Activated CD4-positive, alpha-beta T cell treated with anti-CD3 and anti-CD28 coated beads for 36 hours (primary cell): ENCODE measurements at regions of chr15 and their contacts with region 1.

Region 1: GRCh38 chr15:69523010-69524001 is 70.7 kb downstream of the RPLP1 start:
- DNase-seq: peak; percentile 88
- ATAC-seq: peak; percentile 73
- H3K4me3 Mint-ChIP-seq: no peak overlapping the region
- H3K27ac Mint-ChIP-seq: no peak overlapping the region
- H3K4me1 Mint-ChIP-seq: peaks cover 4% of the 10 kb centered on the region
- H3K27me3 Mint-ChIP-seq: peaks cover 3% of the 10 kb centered on the region

Region 2: DNA sequence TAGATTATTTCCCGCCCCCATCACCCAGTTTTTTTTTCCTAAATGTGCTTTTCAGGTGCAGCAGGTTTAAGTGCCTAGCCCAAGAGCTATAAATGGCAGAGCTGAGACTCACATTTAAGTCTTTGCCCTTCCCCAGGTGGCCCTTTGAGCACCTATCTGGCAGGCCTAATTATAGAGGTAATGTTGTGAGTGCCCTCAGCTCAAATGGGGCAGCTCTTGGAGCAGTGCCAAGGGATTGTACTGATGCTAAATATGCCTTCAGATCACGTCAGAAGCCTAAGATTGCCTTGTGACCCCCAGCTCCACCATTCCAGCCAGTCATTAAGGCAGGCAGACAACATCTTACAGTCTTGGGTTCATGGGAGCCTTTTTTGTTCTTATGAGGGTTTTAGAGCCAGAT is 88.8 kb after region 1 on chr15:
- CTCF ChIA-PET with region 1: no interaction called
- POLR2A ChIA-PET with region 1: no interaction called
- intact Hi-C with region 1: no loop called
- DNase-seq: no peak
- ATAC-seq: no peak
- H3K4me3 Mint-ChIP-seq: no peak overlapping the region
- H3K27ac Mint-ChIP-seq: no peak overlapping the region
- H3K4me1 Mint-ChIP-seq: peaks cover 8% of the 10 kb centered on the region
- H3K27me3 Mint-ChIP-seq: no peaks in the 10 kb centered on the region

Region 3: DNA sequence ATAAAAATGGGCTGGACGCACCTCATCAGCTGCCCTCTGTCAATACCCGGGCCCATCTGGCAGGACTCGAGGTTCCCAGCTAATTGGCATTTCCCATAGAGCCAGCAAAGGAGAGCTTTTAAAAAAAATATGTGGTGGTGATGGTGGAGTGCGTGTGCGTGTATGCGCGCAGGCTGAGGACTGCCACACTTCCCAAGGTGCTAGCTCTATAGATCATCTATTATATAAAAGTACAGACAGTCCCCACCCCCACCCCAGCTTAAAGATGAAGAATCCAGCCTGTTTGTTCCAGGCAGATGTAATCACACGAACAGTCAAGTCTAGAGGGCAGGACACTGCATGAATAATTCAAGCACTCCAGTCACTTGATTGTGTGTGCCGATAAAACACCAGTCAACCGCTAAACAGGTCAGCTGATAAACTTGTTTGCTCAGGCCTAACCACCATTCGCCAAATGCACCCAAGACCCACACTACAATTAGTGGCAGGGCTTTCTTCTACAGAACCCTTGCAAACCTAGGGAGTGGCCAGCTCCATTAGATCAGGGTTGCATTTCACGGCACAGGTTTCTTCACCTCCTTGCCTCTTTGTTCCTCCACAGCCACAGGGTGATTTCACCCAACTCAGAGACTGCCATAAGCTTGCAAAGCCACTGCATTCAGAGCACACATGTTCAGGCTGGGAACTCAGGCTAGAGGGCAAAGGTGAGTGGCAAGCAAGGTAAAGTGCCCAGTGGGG is 568.6 kb after region 1 on chr15:
- CTCF ChIA-PET with region 1: no interaction called
- POLR2A ChIA-PET with region 1: no interaction called
- intact Hi-C with region 1: loop called in 1 of 2 experiments (anchors 5 kb)
- DNase-seq: peak; percentile 39
- ATAC-seq: peak; percentile 16
- H3K4me3 Mint-ChIP-seq: peak overlapping the region; percentile 37
- H3K27ac Mint-ChIP-seq: no peak overlapping the region
- H3K4me1 Mint-ChIP-seq: peaks cover 74% of the 10 kb centered on the region
- H3K27me3 Mint-ChIP-seq: no peaks in the 10 kb centered on the region

Region 4: DNA sequence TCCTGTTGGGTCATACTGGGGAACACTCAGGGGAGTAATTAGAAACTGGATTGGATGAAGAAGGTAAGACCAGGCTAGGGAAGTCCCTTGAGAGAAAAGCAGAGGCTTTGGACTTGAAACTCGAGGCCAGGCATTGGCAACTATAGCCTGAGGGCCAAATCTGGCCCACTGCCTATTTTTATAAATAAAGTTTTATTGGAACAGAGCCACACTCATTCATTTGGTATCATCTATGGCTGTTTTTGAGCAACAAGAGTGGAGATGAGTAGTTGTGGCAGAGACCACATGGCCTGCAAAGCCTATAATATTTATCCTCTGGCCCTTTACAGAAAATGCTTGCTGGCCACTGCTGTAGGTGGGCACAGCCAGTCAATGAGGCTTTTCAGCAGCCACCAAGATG is 938.7 kb after region 1 on chr15:
- CTCF ChIA-PET with region 1: no interaction called
- POLR2A ChIA-PET with region 1: no interaction called
- intact Hi-C with region 1: loop called in 1 of 2 experiments (anchors 2 kb)
- DNase-seq: no peak
- ATAC-seq: no peak
- H3K4me3 Mint-ChIP-seq: no peak overlapping the region
- H3K27ac Mint-ChIP-seq: no peak overlapping the region
- H3K4me1 Mint-ChIP-seq: peaks cover 10% of the 10 kb centered on the region
- H3K27me3 Mint-ChIP-seq: peaks cover 11% of the 10 kb centered on the region